Activated T-helper 1 cell treated with anti-CD3 and anti-CD28 coated beads, Interleukin-12 subunit alpha, Interleukin-12 subunit beta, Interleukin-2, Interleukin-4 antibody, amounts not matched to agents 30 ng/mL and 10 ng/mL and 1 ng/mL, durations not matched to agents 14 hours and 24 hours and 36 hours (primary cell): ENCODE measurements at regions of chr1 and their contacts with region 1.

Region 1: DNA sequence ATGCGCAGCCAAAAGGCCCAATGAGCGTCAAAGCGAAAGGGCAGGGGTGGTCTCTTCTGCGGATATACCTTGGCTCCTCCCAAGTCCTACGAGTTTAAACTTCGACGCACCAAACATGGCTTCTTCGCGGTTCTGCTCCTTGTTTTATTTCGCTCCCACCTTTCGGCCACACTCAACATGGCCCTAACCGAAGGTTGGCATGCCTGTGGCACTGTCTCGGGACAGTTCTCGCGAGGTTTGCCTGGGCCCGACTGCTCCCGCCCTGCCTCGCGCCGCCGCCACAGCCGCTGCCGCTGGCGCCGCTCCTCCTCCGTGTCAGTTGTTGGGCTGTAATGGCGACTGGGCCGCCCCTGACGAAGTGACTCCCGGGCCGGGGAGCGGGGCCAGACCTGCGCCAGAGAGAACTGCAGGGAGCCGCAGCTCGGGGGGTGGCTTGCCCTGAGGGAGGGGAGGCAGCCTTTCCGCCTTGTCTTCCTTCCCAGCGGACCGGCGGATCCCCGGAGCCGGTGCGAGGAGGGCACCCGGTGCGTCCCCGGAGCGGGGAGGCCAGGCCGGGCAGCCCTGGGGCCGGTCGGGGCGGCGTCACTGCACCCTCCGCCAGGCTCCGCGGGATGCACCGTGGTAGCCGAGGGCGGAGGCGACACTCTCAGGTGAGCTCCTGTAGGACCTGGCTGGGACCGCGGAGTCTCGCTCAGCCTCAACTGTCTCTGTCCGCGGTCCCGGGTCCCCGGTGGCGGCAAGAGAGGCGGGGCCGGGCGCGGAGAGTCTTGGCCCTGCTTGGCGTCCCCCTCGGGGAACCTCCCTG is at the start of gene CEP350:
- DNase-seq: peak; percentile 96
- H3K4me3 Mint-ChIP-seq: peak within 1 kb of the TSS; percentile 94
- H3K27ac Mint-ChIP-seq: peak within 1 kb of the TSS; percentile 94
- H3K4me1 Mint-ChIP-seq: peaks cover 50% of the 10 kb centered on the region
- H3K27me3 Mint-ChIP-seq: no peaks in the 10 kb centered on the region
- total RNA-seq, gene CEP350: 44.6 and 51.6 TPM in 2 replicates

Region 2: GRCh38 chr1:179025125-179025974 is 929.3 kb before region 1 on chr1 and contains the start of gene FAM20B:
- intact Hi-C with region 1: loop called (anchors 1 kb)
- DNase-seq: peak; percentile 86
- H3K4me3 Mint-ChIP-seq: peak within 1 kb of the TSS; percentile 89
- H3K27ac Mint-ChIP-seq: peak within 1 kb of the TSS; percentile 82
- H3K4me1 Mint-ChIP-seq: peaks cover 43% of the 10 kb centered on the region
- H3K27me3 Mint-ChIP-seq: peaks cover 18% of the 10 kb centered on the region
- total RNA-seq, gene FAM20B: 36.6 and 39.2 TPM in 2 replicates

Region 3: GRCh38 chr1:179882243-179883039 is 72.3 kb before region 1 on chr1 and contains the start of gene TOR1AIP1:
- intact Hi-C with region 1: loop called (anchors 1 kb)
- DNase-seq: peak; percentile 98
- H3K4me3 Mint-ChIP-seq: peak within 1 kb of the TSS; percentile 95
- H3K27ac Mint-ChIP-seq: peak within 1 kb of the TSS; percentile 100
- H3K4me1 Mint-ChIP-seq: peaks cover 55% of the 10 kb centered on the region
- H3K27me3 Mint-ChIP-seq: no peaks in the 10 kb centered on the region
- total RNA-seq, gene TOR1AIP1: 76.1 and 80.5 TPM in 2 replicates

Region 4: DNA sequence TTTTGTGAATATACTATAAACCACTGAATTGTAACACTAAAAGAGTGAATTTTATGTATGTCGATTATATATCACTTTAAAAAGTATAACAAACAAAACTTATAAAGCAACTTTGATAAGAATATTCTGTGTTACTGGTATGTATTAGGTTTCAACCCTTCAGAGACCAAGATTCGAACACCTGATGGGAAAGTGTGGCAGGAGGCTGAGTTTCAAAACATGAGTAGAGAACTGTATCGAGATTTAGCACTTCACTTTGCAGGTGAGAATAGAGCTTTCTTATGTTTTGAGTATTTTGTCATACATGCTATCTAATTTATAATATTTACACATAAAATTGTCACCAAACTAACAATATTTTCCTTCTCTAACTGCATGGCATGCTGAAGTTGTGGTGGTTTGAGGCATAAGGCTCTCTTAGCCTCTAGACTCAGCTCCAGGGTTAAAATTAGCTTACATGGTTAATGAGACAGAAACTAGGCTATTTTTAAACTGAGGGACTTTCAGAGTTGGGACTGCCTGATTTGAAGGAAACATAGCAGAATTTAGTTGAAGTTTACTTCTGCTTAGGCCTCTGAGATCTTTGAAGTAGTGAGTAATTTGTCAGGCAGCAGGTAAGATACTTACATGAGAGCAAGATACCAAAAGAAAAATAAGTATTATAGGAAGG is 48.5 kb after region 1 on chr1:
- intact Hi-C with region 1: loop called (anchors 5 kb)
- DNase-seq: no peak
- H3K4me3 Mint-ChIP-seq: no peak overlapping the region
- H3K27ac Mint-ChIP-seq: no peak overlapping the region
- H3K4me1 Mint-ChIP-seq: no peaks in the 10 kb centered on the region
- H3K27me3 Mint-ChIP-seq: no peaks in the 10 kb centered on the region

Region 5: DNA sequence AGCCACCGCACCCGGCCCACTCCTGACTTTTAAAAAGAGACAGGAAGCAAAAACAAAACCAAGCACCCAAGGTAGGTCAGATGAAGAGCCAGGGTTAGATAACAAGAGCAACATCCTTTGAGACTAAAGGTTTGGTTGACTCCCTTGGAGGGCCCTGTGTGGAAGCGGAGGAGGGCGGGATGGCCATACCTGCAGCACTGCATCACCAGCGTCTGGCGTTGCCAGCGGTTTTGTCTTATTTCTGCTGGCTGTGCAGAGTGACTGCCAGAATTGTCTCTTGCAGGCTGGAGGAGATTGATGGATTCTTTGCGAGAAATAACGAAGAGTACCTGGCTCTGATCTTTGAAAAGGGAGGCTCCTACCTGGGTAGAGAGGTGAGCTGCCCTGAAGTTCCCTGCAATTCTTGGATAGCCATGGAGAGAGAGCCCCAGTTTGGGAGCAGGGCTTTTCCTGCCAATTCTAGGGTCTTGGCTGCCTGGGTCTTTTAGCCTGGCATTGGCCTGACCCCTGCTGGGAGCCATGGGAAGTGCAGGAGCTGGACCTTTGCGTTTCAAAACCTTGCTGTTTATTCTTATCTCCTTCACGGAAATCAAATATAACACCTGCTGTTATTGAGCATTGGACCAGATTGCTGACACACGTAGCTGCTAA is 223.9 kb after region 1 on chr1:
- intact Hi-C with region 1: loop called (anchors 2 kb)
- DNase-seq: peak; percentile 24
- H3K4me3 Mint-ChIP-seq: no peak overlapping the region
- H3K27ac Mint-ChIP-seq: no peak overlapping the region
- H3K4me1 Mint-ChIP-seq: no peaks in the 10 kb centered on the region
- H3K27me3 Mint-ChIP-seq: no peaks in the 10 kb centered on the region

Region 6: DNA sequence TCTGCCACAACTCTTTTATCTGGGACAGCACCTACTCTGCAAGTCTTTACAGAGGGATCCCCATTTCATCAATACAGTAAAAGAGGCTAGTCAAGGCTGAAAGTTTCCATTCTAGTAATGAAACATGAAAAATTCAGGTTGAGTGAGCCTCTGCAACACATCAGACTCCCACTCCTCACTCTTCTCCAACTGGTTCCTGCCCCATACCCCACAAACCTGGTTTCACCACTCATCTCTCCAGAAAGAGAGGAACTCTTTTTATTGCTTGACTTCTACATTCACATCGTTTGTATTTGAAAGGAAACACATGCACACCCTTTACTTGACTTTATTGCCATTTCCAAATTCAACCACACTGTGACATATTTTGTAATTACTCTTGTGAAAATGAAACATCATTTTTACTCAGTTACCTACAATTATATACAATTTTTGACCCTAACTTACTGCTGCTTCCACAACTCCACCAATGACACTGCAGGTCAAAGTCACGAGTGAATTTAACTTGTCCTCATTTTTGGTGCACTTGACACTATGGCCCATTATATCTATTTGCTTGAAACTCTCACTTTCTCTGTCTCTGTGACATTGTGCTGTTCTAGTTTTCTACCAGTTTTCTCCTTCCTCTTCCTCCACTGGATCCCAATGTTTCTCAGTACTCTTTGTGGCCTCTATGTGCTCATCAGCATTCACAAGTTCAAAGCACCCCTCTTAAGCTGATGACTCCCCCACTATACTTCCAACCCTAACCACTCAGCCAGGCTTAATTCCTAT is 1060.0 kb after region 1 on chr1:
- intact Hi-C with region 1: loop called (anchors 10 kb)
- DNase-seq: no peak
- H3K4me3 Mint-ChIP-seq: no peak overlapping the region
- H3K27ac Mint-ChIP-seq: no peak overlapping the region
- H3K4me1 Mint-ChIP-seq: peaks cover 44% of the 10 kb centered on the region
- H3K27me3 Mint-ChIP-seq: no peaks in the 10 kb centered on the region